Endothelial cell of umbilical vein (primary cell): ENCODE measurements at regions of chr15 and their contacts with region 1.

Region 1: GRCh38 chr15:53586799-53587198 is 172.7 kb downstream of the WDR72 start:
- DNase-seq: peak; percentile 35
- H3K4me3 ChIP-seq: no peak overlapping the region
- H3K27ac ChIP-seq: no peak overlapping the region
- H3K4me1 ChIP-seq: no peaks in the 10 kb centered on the region
- H3K27me3 ChIP-seq: no peaks in the 10 kb centered on the region
- CTCF ChIP-seq: peak; percentile 35 to 54
- POLR2A ChIP-seq: no peak

Region 2: GRCh38 chr15:53611145-53611920 is 24.5 kb after region 1 on chr15:
- CTCF ChIA-PET with region 1: no interaction called
- POLR2A ChIA-PET with region 1: no interaction called
- dilution Hi-C with region 1: no loop called
- intact Hi-C with region 1: loop called (anchors 1 kb)
- DNase-seq: peak; percentile 97
- H3K4me3 ChIP-seq: no peak overlapping the region
- H3K27ac ChIP-seq: peak overlapping the region; percentile 85
- H3K4me1 ChIP-seq: peaks cover 18% of the 10 kb centered on the region
- H3K27me3 ChIP-seq: no peaks in the 10 kb centered on the region
- CTCF ChIP-seq: peak; percentile 16
- POLR2A ChIP-seq: peak; percentile 49